Vagina (tissue), 2 donors: ENCODE measurements at regions of chr16 and their contacts with region 1.

Region 1: GRCh38 chr16:24668481-24669061 is 60.9 kb upstream of the TNRC6A start:
- DNase-seq: peak in 1 of 2 donors; percentile 92
- H3K4me3 ChIP-seq: no peak overlapping the region
- H3K27ac ChIP-seq: peak overlapping the region; percentile 84
- H3K4me1 ChIP-seq: peaks cover 29% of the 10 kb centered on the region
- H3K27me3 ChIP-seq: no peaks in the 10 kb centered on the region
- CTCF ChIP-seq: no peak
- POLR2A ChIP-seq: no peak

Region 2: GRCh38 chr16:24645739-24646645 is 22.6 kb before region 1 on chr16:
- intact Hi-C with region 1: loop called (anchors 1 kb)
- DNase-seq: no peak
- H3K4me3 ChIP-seq: no peak overlapping the region
- H3K27ac ChIP-seq: peak overlapping the region; percentile 59
- H3K4me1 ChIP-seq: no peaks in the 10 kb centered on the region
- H3K27me3 ChIP-seq: no peaks in the 10 kb centered on the region
- CTCF ChIP-seq: no peak
- POLR2A ChIP-seq: no peak

Region 3: DNA sequence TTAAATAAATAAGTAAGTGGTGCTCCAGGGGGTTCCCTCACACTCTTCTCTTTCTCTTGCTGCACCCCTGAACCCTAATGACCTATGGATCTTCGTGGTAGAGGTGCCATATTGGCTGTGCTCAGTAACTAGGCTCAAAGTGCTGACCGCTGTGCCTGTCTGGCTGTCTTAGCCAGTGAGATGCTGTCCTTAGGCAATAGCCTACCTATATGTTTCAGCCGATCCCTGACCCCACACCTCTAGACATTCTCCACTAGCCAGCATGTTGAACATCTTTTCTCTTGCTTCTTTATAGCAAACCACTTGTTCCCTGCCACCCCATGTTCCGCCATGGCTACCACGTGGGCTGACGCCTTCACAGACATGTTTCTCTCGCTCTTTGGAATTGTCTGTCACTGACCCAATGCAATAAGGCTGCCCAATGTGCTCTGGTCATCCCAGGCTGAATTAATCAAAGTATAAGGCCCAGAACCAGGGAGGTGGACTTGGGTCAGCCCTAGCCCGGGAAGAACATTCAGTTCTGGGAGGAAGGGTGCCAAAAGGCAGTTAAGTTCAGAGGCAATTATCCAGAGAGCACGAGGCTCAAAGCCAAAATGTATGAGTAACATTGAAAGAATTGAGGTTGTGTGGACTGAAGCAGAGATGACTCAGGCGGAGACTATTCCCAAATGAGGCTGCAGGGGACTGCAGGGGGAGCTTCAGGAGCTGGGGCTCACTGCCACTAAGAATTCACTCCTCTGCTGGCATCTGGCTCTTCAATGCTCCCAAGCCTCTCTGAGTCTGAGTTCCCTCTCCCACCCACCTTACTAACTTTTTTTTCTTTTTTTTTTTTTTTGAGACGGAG is 32.2 kb after region 1 on chr16:
- intact Hi-C with region 1: no loop called
- DNase-seq: peak in 1 of 2 donors; percentile 96
- H3K4me3 ChIP-seq: no peak overlapping the region
- H3K27ac ChIP-seq: peak overlapping the region; percentile 82
- H3K4me1 ChIP-seq: peaks cover 19% of the 10 kb centered on the region
- H3K27me3 ChIP-seq: no peaks in the 10 kb centered on the region
- CTCF ChIP-seq: peak in 1 of 3 experiments; percentile 30
- POLR2A ChIP-seq: no peak